Mammary epithelial cell (primary cell): ENCODE measurements at regions of chr6 and their contacts with region 1.

Region 1: DNA sequence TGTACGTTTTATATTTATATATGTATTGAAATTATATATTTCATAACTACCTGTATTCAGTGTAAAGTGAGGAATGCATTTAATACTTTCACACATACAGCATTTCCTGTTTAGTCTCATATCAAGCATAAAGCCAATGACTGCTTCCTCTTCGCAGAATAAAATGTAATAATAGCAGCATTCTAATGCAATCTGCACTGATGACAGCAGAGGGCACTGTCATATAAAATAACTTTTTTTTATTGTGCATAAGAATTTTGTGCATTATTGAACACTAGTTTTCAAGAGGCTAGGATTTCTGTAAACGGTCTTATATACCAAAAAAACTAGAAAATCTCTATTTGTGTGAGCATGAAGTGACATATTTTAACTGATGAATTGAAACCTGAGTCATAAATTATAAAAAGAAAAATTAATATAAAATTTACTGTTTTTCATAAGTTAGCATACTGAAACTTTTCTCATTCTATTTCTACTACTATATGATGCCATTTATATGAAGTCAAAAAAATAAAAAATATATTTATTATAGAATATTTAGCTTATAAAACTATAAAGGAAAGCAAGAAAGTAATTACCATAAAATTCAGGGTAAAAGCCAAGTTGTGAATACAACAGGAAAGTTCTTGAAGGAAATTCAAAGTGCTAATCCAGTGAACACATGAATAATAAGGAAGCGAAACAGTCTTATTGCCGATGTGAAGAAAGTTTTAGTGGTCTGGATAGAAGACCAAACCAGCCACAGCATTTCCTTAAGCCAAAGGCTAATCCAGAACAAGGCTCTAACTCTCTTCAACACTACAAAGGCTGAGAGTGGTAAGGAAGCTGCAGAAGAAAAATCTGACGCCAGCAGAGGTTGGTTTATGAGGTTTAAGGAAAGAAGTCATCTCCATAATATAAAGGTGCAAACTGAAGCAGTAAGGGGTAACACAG is 36.3 kb downstream of the RNF146 start:
- DNase-seq: peak; percentile 33
- H3K4me3 ChIP-seq: no peak overlapping the region
- H3K27ac ChIP-seq: no peak overlapping the region
- H3K4me1 ChIP-seq: peaks cover 7% of the 10 kb centered on the region
- H3K27me3 ChIP-seq: no peaks in the 10 kb centered on the region
- CTCF ChIP-seq: peak; percentile 68 to 87

Region 2: DNA sequence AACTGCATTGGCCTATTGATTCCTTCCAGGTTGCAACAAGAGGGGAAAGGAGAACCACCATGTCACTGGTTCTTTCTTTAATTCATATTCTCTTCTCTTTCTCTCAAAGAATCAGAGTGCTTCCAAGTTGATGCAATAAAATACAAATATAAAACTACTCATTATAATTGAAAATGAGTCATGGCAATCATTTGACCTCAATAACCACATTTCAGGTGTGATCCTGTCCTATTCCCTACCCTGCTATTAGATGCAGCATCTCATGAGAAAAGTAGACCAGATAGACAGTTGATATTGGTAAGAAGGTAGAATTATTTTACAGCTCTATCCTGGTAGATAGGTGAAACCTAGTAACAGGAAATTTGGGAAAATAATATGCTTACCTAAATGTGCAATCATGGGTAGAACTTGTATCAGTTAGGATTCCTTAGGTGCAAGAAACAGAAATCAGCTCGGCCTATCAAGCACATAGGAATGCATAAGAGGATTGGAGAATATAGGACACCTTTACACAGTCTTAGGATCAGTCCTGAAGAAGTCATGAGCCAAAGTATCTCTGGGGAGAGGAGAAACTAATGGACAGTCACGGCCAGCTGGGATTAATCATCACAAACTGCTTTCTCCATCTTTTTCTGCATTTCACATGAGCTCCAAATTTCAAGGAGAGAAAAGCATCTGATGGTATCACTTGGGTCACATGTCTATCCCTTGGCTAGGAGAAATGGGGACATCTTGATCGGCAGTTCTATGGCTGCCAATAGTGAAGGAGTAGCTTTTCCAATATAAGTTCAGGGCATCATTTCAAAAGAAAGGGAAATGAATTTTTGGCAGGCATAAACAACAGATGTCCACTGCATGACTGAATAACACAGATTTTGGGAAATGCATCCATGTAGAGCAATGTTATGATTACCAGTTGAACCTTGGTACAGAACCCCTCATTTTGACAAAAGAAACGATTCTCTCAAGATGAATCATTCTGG is 55.6 kb before region 1 on chr6:
- CTCF ChIA-PET with region 1: no interaction called
- dilution Hi-C with region 1: no loop called
- in situ Hi-C with region 1: no loop called
- intact Hi-C with region 1: no loop called
- DNase-seq: peak; percentile 71
- H3K4me3 ChIP-seq: no peak overlapping the region
- H3K27ac ChIP-seq: no peak overlapping the region
- H3K4me1 ChIP-seq: peaks cover 9% of the 10 kb centered on the region
- H3K27me3 ChIP-seq: no peaks in the 10 kb centered on the region
- CTCF ChIP-seq: no peak

Region 3: GRCh38 chr6:127420556-127420955 is 117.6 kb after region 1 on chr6:
- CTCF ChIA-PET with region 1: no interaction called
- dilution Hi-C with region 1: no loop called
- in situ Hi-C with region 1: loop called in 1 of 2 experiments (anchors 10 kb)
- intact Hi-C with region 1: loop called (anchors 1 kb)
- DNase-seq: peak; percentile 89
- H3K4me3 ChIP-seq: no peak overlapping the region
- H3K27ac ChIP-seq: peak overlapping the region; percentile 40
- H3K4me1 ChIP-seq: peaks cover 7% of the 10 kb centered on the region
- H3K27me3 ChIP-seq: no peaks in the 10 kb centered on the region
- CTCF ChIP-seq: peak; percentile 6 to 56

Region 4: DNA sequence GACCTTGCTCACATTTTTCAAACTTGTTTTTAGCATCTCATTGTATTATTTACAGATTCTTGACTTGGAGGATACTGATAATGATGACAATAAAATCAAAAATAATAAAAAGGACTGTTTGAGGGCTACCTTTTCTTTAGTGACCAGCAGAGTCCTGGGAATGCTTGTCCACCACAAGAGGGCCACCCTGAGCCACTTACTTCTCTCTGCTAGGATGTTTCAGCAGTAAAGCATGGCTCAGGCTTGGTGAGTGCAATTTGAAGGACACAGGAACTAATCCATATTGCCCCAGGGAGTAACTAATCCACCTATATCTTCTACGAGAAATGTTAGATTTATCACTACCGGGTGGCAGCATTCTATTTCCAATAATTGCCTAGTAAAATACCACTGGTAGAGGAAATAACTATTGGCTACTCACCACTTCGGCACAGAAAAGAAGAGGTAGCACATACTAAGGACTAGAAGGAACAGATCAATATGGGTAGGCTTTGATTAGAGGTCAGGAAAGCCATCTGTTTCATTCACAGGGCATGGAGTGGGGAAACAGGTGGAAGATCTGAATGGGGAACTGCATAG is 162.0 kb after region 1 on chr6:
- CTCF ChIA-PET with region 1: no interaction called
- dilution Hi-C with region 1: no loop called
- in situ Hi-C with region 1: loop called in 1 of 2 experiments (anchors 25 kb)
- intact Hi-C with region 1: loop called (anchors 1 kb)
- DNase-seq: peak; percentile 43
- H3K4me3 ChIP-seq: no peak overlapping the region
- H3K27ac ChIP-seq: no peak overlapping the region
- H3K4me1 ChIP-seq: no peaks in the 10 kb centered on the region
- H3K27me3 ChIP-seq: peaks cover 3% of the 10 kb centered on the region
- CTCF ChIP-seq: peak; percentile 92 to 93